Mammary epithelial cell (primary cell): ENCODE measurements at regions of chr6 and their contacts with region 1.

Region 1: DNA sequence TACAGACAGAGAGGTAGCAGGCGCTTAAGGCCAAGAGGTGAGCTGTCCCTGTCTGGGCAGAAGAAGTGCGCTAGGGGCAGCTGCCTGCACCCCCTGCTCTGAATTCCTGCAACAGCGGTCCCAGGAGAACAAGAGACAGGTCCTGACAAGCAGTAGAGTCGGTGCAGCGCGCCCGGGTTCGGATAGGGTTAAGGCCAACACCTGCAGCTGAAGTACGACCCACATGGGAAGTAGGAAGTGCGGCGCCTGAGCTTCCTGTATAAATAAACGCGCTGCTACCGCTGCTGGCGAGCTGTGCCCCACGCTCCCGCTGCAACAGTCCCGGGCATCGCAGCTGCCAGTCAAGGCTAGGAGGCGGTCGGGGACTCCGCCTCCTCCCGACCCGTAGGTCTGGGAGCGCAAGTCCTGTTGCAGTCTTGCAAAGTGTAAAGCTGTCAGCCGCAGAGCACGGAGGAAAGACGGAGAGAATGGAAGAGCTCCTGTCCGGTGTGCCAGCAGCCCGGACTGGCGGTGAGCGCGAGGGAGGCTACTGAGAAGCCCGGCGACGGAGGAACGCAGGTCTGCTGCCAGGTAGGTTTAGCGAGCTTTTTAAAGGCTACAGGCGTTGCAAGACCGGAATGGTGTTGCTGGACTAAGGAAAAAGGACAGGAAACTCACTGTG is at the start of gene RNF144B:
- DNase-seq: peak; percentile 95
- H3K4me3 ChIP-seq: peak within 1 kb of the TSS; percentile 81 to 89 (median 85)
- H3K27ac ChIP-seq: peak within 1 kb of the TSS; percentile 98
- H3K4me1 ChIP-seq: peaks cover 24% of the 10 kb centered on the region
- H3K27me3 ChIP-seq: no peaks in the 10 kb centered on the region
- CTCF ChIP-seq: peak in 1 of 2 donors; percentile 5
- total RNA-seq, gene RNF144B: 45.7 to 74.7 TPM

Region 2: DNA sequence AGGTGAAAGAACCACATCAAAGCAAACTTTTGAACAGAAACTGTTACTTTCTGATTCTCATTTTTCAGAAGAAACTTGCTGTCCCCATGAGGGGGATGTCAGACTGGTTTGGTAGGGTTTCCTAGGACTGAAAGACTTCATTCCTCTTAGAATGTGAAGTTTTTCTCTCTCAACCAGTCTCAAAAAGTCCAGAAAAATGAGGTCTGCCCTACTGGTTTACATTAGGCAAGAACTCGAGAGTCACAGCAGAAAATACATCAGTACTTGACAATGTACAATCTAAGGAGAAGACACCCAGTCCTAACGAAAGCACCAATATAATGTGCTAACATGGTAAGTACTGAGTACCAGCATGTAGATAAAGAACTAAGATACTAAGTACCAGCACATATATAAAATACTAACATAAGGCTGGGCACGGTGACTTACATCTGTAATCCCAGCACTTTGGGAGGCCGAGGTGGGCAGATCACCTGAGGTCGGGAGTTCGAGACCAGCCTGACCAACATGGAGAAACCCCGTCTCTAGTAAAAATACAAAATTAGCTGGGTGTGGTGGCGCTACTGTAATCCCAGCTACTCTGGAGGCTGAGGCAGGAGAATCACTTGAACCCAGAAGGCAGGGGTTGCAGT is 251.9 kb before region 1 on chr6:
- CTCF ChIA-PET with region 1: no interaction called
- dilution Hi-C with region 1: no loop called
- in situ Hi-C with region 1: no loop called
- intact Hi-C with region 1: no loop called
- DNase-seq: no peak
- H3K4me3 ChIP-seq: no peak overlapping the region
- H3K27ac ChIP-seq: no peak overlapping the region
- H3K4me1 ChIP-seq: no peaks in the 10 kb centered on the region
- H3K27me3 ChIP-seq: no peaks in the 10 kb centered on the region
- CTCF ChIP-seq: no peak

Region 3: DNA sequence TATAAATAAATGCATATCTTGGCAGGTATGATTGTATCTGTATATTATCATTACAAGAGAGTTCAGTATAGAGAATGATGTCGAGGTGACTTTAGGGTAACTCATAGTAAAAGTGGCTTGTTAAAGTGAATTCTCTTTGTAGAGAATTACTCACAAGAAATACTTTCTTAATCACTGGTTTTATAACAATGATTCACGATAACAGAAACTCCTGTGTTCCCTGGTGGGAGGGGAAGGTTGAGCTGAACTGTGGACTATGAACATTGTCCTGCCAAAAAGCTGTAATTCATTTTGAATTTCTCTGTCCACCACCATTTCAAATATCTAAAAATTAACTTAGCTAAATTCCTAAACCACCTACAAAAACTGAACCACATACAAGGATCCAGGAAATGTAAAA is 240.0 kb before region 1 on chr6:
- CTCF ChIA-PET with region 1: no interaction called
- dilution Hi-C with region 1: no loop called
- in situ Hi-C with region 1: no loop called
- intact Hi-C with region 1: no loop called
- DNase-seq: peak; percentile 88
- H3K4me3 ChIP-seq: no peak overlapping the region
- H3K27ac ChIP-seq: peak overlapping the region; percentile 98
- H3K4me1 ChIP-seq: peaks cover 20% of the 10 kb centered on the region
- H3K27me3 ChIP-seq: no peaks in the 10 kb centered on the region
- CTCF ChIP-seq: no peak

Region 4: DNA sequence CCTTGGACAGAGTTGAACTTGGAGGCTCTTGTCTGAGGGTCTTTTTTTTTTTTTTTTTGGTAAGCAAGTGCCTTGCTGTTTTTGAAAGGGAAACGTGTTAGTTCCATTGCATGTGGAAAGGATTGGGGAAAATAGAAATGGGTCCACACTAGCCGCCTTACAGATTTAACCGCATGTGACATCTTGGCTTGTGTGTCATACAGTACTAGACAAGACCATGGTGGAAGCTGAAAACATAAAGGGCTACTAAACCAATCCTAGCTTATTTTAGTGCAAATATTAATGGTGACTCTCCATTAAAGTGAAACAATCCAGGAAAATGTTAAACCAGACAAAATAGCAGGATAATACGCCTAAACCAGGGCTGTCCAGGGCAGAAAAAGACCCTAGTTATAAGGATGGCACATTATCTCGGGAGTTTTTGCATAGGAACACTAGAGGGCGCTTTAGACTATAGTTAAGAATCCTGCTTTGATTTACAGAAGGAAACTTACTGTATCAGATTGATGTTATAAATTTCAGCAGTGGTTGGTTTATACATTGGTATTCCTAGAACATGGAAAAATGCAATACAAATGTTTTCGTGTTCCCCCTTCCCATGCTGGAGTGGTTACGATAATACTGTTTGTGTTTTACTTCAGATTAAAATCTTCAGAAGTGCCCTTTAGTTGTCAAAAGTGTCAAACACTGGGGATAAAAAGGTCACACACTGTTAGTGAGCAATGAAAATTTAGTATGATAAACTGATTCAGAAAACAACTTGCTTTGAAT is 63.1 kb before region 1 on chr6:
- CTCF ChIA-PET with region 1: no interaction called
- dilution Hi-C with region 1: no loop called
- in situ Hi-C with region 1: no loop called
- intact Hi-C with region 1: loop called (anchors 1 kb)
- DNase-seq: peak; percentile 40
- H3K4me3 ChIP-seq: no peak overlapping the region
- H3K27ac ChIP-seq: no peak overlapping the region
- H3K4me1 ChIP-seq: peaks cover 23% of the 10 kb centered on the region
- H3K27me3 ChIP-seq: no peaks in the 10 kb centered on the region
- CTCF ChIP-seq: peak; percentile 58 to 66

Region 5: GRCh38 chr6:18350712-18351111 is 36.5 kb before region 1 on chr6:
- CTCF ChIA-PET with region 1: no interaction called
- dilution Hi-C with region 1: no loop called
- in situ Hi-C with region 1: no loop called
- intact Hi-C with region 1: loop called (anchors 2 kb)
- DNase-seq: peak; percentile 31
- H3K4me3 ChIP-seq: no peak overlapping the region
- H3K27ac ChIP-seq: peak overlapping the region; percentile 63
- H3K4me1 ChIP-seq: peaks cover 62% of the 10 kb centered on the region
- H3K27me3 ChIP-seq: no peaks in the 10 kb centered on the region
- CTCF ChIP-seq: no peak

Region 6: GRCh38 chr6:18477301-18477941 is 90.2 kb after region 1 on chr6:
- CTCF ChIA-PET with region 1: no interaction called
- dilution Hi-C with region 1: loop called (anchors 25 kb)
- in situ Hi-C with region 1: no loop called
- intact Hi-C with region 1: no loop called
- DNase-seq: no peak
- H3K4me3 ChIP-seq: no peak overlapping the region
- H3K27ac ChIP-seq: no peak overlapping the region
- H3K4me1 ChIP-seq: no peaks in the 10 kb centered on the region
- H3K27me3 ChIP-seq: no peaks in the 10 kb centered on the region
- CTCF ChIP-seq: no peak

Region 7: GRCh38 chr6:18823782-18824386 is 436.7 kb after region 1 on chr6:
- CTCF ChIA-PET with region 1: no interaction called
- dilution Hi-C with region 1: no loop called
- in situ Hi-C with region 1: no loop called
- intact Hi-C with region 1: no loop called
- DNase-seq: peak; percentile 28
- H3K4me3 ChIP-seq: no peak overlapping the region
- H3K27ac ChIP-seq: no peak overlapping the region
- H3K4me1 ChIP-seq: no peaks in the 10 kb centered on the region
- H3K27me3 ChIP-seq: no peaks in the 10 kb centered on the region
- CTCF ChIP-seq: peak; percentile 63 to 67